ENCODE measurements at regions of chr10 and their contacts with region 1.

Region 1: GRCh38 chr10:95693668-95694534 is at the start of gene TCTN3:
- DNase-seq: peak; percentile 97
- ATAC-seq: peak; percentile 100
- H3K4me3 Mint-ChIP-seq: peak within 1 kb of the TSS; percentile 99
- H3K27ac Mint-ChIP-seq: peak within 1 kb of the TSS; percentile 97
- H3K4me1 Mint-ChIP-seq: peaks cover 17% of the 10 kb centered on the region
- H3K27me3 Mint-ChIP-seq: peaks cover 7% of the 10 kb centered on the region
- CTCF ChIP-seq: peak; percentile 99
- total RNA-seq, gene TCTN3: 26.4 to 33.5 TPM (median 29.3 TPM) in 3 replicates

Region 2: DNA sequence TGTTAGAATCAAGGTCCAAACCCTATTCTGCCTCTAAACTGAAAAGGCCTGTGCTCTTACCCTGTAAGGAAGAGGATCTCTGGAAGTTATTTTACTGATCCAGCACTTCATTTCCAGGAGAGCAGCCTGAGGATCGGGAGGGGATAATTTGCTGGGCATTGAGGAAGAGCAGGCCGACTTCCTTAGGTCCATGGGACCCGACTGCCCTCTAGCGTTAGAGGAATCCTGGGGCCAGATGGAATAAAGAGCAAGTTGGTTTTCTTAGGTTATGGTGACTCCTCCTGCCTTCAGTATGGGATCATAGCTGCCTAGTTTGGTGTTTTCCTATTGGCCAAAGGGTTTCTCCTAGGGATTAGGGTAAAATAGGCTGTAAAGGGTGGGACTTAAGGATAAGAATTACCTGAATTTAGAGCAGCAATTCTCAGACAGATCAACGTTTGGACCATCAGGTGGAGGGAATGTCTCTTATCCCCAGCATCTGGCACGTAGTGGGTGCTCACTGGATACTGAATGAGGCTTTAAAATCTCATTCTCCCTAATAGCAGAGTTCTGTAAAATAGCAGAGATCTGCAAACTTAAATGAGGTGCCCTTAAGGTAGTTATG is 92.7 kb before region 1 on chr10:
- CTCF ChIA-PET with region 1: interaction called, 11 read pairs
- POLR2A ChIA-PET with region 1: no interaction called
- DNase-seq: peak; percentile 86
- ATAC-seq: peak; percentile 95
- H3K4me3 Mint-ChIP-seq: no peak overlapping the region
- H3K27ac Mint-ChIP-seq: no peak overlapping the region
- H3K4me1 Mint-ChIP-seq: peaks cover 14% of the 10 kb centered on the region
- H3K27me3 Mint-ChIP-seq: no peaks in the 10 kb centered on the region
- CTCF ChIP-seq: peak; percentile 81

Region 3: GRCh38 chr10:95675403-95676112 is 18.3 kb before region 1 on chr10:
- CTCF ChIA-PET with region 1: interaction called, 14 read pairs
- POLR2A ChIA-PET with region 1: interaction called, 3 read pairs
- DNase-seq: no peak
- ATAC-seq: peak; percentile 22; the same call in 1 of the 2 replicates
- H3K4me3 Mint-ChIP-seq: no peak overlapping the region
- H3K27ac Mint-ChIP-seq: no peak overlapping the region
- H3K4me1 Mint-ChIP-seq: no peaks in the 10 kb centered on the region
- H3K27me3 Mint-ChIP-seq: no peaks in the 10 kb centered on the region
- CTCF ChIP-seq: no peak

Region 4: GRCh38 chr10:95741807-95742467 is 48.0 kb after region 1 on chr10:
- CTCF ChIA-PET with region 1: interaction called, 11 read pairs
- POLR2A ChIA-PET with region 1: no interaction called
- DNase-seq: no peak
- ATAC-seq: peak; percentile 90
- H3K4me3 Mint-ChIP-seq: no peak overlapping the region
- H3K27ac Mint-ChIP-seq: no peak overlapping the region
- H3K4me1 Mint-ChIP-seq: peaks cover 21% of the 10 kb centered on the region
- H3K27me3 Mint-ChIP-seq: no peaks in the 10 kb centered on the region
- CTCF ChIP-seq: no peak

Region 5: GRCh38 chr10:95820363-95820762 is 126.5 kb after region 1 on chr10:
- CTCF ChIA-PET with region 1: interaction called, 14 read pairs
- POLR2A ChIA-PET with region 1: no interaction called
- DNase-seq: no peak
- ATAC-seq: no peak
- H3K4me3 Mint-ChIP-seq: no peak overlapping the region
- H3K27ac Mint-ChIP-seq: no peak overlapping the region
- H3K4me1 Mint-ChIP-seq: peaks cover 15% of the 10 kb centered on the region
- H3K27me3 Mint-ChIP-seq: peaks cover 4% of the 10 kb centered on the region; the same call in 1 of the 2 replicates
- CTCF ChIP-seq: no peak

Region 6: DNA sequence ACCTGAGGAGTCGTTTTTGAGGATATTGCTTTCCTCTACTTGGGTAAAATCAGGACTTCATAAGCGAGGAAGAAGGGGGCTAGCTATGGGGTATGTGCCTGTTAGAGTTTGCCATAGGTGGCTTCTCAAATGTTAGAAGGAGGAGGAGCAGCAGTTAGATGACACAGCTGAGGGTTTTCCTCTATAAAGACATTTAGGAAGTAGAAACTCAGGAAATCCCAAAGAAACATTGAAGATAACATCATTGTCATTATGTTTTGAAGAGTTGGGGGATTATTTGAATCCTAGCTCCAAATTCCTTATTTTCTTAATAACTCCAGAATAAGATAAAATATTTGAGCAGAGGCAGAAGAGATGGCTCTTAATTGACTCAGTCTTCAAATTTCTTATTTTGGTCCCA is 154.9 kb after region 1 on chr10:
- CTCF ChIA-PET with region 1: interaction called, 221 read pairs
- POLR2A ChIA-PET with region 1: interaction called, 7 read pairs
- DNase-seq: no peak
- ATAC-seq: no peak
- H3K4me3 Mint-ChIP-seq: no peak overlapping the region
- H3K27ac Mint-ChIP-seq: no peak overlapping the region
- H3K4me1 Mint-ChIP-seq: no peaks in the 10 kb centered on the region
- H3K27me3 Mint-ChIP-seq: no peaks in the 10 kb centered on the region; the same call in 1 of the 2 replicates
- CTCF ChIP-seq: no peak

Measured in WTC11 (cell line).